Left colon (tissue), 2 donors: ENCODE measurements at regions of chr14 and their contacts with region 1.

Region 1: DNA sequence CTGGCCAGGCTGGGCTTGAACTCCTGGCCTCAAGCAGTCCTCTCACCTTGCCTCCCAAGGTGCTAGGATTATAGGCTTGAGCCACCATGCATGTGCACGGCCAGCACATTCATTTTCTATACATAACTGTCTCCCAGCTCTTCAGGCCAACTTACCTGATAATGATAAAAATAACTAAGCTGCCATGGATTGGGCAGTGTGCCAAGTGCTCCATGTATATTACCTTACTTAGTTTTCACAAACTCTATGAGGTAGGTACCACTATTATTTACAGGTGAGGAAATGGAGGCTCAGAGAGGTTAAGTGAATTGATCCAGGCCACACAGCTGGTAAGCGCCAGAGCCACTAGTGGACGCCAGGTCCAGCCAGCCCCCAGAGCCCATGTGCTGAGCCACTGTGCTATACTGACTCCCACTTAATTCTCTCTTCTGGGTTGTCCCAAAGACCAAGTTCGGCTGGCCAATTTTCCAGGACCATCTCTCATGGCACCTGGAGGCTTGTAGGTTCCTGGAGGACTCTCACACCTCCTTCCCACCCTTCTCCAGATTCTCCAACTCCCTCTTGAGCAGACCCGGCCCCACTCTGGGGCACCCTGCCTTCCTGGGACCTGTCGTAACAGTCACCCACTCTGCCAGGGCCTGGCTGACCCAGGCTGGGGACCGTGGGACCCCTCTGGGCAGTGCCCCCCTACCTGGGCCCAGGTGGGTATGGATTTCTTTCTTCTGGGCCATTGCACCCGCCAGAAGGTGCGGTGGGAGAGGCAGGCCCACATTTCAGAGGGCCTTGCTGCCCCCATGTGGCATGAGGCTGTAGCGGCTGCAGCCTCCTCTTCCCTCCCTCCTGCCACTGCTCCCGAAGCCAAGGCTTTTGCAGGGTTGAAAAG is 30.2 kb upstream of the CIPC start:
- DNase-seq: peak; percentile 58 to 75
- ATAC-seq: peak; percentile 89

Region 2: DNA sequence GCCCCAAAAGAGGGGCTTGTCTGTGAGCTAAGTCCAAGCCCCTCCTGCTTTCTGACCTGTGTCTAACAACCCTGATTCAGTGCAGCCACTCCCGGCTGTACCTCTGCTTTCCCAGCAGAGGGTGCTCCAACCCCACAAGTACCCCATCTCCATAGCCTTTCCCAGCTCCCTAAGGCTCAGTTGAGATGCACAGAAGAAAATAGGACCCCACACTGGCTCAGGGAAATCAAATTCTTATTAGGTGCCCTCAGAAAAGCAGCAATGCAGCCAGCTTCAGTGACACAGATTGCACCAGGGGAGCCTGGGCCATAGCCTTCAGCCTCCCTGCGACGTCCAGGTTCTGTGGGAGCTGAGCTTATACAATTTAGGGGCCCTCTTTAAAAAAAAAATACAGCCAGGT is 191.8 kb before region 1 on chr14:
- intact Hi-C with region 1: loop called (anchors 5 kb)
- DNase-seq: peak in 1 of 2 donors; percentile 48
- ATAC-seq: peak; percentile 94

Region 3: DNA sequence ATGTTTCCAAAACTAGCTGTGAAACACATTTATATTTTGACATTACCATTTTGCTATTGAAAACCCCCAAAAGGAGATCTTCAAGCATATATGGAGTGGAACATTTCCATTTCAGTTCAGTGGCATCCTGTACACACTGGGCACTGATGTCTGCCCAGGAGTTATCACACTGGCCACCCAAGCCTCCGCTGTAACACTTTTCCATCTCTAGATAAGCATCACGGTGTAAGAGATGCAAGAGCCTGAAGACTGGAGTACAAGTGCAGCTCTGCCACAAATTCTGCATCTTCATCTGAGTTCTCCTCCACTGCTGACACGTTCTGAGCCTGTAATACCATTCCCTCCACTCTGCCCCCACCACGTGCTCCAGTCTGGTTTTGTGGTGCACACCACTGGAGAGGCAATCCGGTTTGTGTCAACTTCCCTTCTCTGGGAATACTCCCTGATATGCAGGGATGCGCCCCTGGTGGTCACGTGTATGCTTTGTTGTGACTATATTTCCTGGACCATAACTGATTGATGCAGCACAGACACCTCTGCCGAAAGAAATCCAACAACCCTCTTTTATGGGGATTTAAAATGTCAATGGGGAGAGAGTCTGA is 535.9 kb after region 1 on chr14:
- intact Hi-C with region 1: no loop called
- DNase-seq: peak; percentile 49 to 51
- ATAC-seq: peak; percentile 27